ENCODE measurements at regions of chr2 and their contacts with region 1.

Region 1: DNA sequence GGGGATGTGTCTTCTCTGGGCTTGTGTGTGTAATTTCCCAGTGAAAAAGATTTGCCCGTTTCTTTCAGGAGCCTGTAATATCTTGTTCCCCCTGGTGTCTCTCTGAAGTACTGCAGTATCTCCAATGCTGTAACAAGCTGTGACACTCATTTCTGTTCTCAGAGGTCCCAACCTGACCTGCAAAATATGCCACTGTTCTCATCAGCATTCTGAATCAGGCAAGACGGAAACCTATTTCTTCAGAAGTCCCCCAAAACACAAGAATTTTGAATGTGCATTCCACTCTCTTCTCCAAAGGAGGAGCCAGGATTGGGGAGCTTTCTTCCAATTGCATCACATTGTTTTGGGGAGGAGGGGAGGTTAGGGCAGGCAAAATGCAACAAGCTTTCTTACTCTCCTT is 77.0 kb upstream of the CNGA3 start:
- ATAC-seq: peak in 3 of 8 experiments; percentile 67 to 83 (median 73)
- H3K4me3 ChIP-seq: no peak overlapping the region
- H3K27ac ChIP-seq: no peak overlapping the region
- H3K4me1 ChIP-seq: no peaks in the 10 kb centered on the region

Region 2: GRCh38 chr2:98026927-98027522 is 242.2 kb before region 1 on chr2:
- in situ Hi-C with region 1: loop called in 1 of 9 experiments (anchors 25 kb)
- ATAC-seq: no peak
- H3K4me3 ChIP-seq: no peak overlapping the region
- H3K27ac ChIP-seq: no peak overlapping the region
- H3K4me1 ChIP-seq: peaks cover 0 to 2% of the 10 kb centered on the region in 2 donors

Region 3: DNA sequence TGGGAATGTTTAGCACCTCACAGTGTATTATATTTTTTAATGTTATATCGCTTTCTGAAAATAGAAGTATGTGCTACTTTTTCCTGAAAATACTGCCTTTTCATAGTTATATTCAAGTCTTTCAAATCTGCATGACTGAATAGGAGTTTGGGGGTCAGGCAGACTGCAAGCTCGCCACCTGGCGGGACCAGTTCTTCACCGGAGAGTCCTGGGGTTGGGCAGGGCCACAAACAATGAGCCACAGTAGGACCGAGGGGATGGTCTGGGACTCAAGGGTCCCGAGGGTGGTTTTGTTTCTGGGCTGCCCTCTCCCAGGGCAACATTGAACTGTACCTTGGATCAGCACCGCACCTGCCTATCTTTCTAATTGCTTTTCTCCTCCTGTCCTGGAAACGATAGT is 111.7 kb before region 1 on chr2:
- in situ Hi-C with region 1: loop called in 1 of 9 experiments (anchors 25 kb)
- ATAC-seq: no peak
- H3K4me3 ChIP-seq: no peak overlapping the region
- H3K27ac ChIP-seq: no peak overlapping the region
- H3K4me1 ChIP-seq: peaks cover 19 to 26% of the 10 kb centered on the region in 2 donors

Region 4: GRCh38 chr2:98385050-98385699 is 115.9 kb after region 1 on chr2:
- in situ Hi-C with region 1: no loop called
- ATAC-seq: peak; percentile 90 to 100 (median 94)
- H3K4me3 ChIP-seq: no peak overlapping the region
- H3K27ac ChIP-seq: no peak overlapping the region
- H3K4me1 ChIP-seq: peaks cover 2 to 10% of the 10 kb centered on the region in 2 donors

Region 5: GRCh38 chr2:98615481-98615880 is 346.2 kb after region 1 on chr2:
- in situ Hi-C with region 1: no loop called
- ATAC-seq: peak in 1 of 8 experiments; percentile 23
- H3K4me3 ChIP-seq: no peak overlapping the region
- H3K27ac ChIP-seq: no peak overlapping the region
- H3K4me1 ChIP-seq: peaks cover under 1 to 10% of the 10 kb centered on the region in 2 donors